Prostate gland (tissue), 2 donors: ENCODE measurements at regions of chr11 and their contacts with region 1.

Region 1: DNA sequence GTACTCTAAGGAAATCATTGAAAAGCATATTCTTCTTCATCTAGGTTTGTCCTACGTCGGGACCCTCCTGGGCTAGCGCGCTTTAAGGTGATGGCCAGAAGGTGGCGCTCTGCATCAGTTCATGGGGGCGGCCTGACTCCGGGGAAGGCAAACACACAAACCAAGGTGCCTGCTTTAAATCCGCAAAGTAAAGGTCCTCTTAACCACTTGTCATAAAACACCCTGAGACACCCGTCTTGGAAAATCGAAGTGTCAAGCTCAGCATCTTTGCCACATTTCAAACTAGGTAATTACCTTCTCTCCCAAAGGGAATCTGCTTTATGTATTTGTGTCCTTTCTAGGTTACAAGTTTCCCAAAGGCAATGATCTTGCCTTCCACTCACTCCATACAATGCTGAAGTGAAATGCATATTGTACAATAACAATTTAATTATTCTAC is 33.9 kb downstream of the LMO2 start:
- DNase-seq: peak; percentile 57
- H3K4me3 ChIP-seq: no peak overlapping the region
- H3K27ac ChIP-seq: no peak overlapping the region
- H3K4me1 ChIP-seq: no peaks in the 10 kb centered on the region
- H3K27me3 ChIP-seq: no peaks in the 10 kb centered on the region
- CTCF ChIP-seq: peak; percentile 54 to 89 (median 80)
- POLR2A ChIP-seq: no peak

Region 2: GRCh38 chr11:33753304-33753967 is 104.5 kb before region 1 on chr11:
- intact Hi-C with region 1: no loop called
- DNase-seq: no peak
- H3K4me3 ChIP-seq: no peak overlapping the region
- H3K27ac ChIP-seq: no peak overlapping the region
- H3K4me1 ChIP-seq: no peaks in the 10 kb centered on the region
- H3K27me3 ChIP-seq: no peaks in the 10 kb centered on the region
- CTCF ChIP-seq: no peak
- POLR2A ChIP-seq: no peak

Region 3: GRCh38 chr11:33970984-33971466 is 113.1 kb after region 1 on chr11:
- intact Hi-C with region 1: loop called (anchors 2 kb)
- DNase-seq: peak; percentile 35
- H3K4me3 ChIP-seq: no peak overlapping the region
- H3K27ac ChIP-seq: no peak overlapping the region
- H3K4me1 ChIP-seq: no peaks in the 10 kb centered on the region
- H3K27me3 ChIP-seq: no peaks in the 10 kb centered on the region
- CTCF ChIP-seq: peak; percentile 11 to 80 (median 67)
- POLR2A ChIP-seq: no peak